Natural killer cell (primary cell): ENCODE measurements at regions of chr19 and their contacts with region 1.

Region 1: GRCh38 chr19:14383661-14384555 is 2.7 kb downstream of the ADGRE5 start:
- DNase-seq: peak; percentile 70 to 82
- ATAC-seq: peak; percentile 20 to 28 (median 21)
- H3K4me3 ChIP-seq: peak overlapping the region; percentile 71
- H3K4me3 Mint-ChIP-seq: peak overlapping the region; percentile 93
- H3K27ac ChIP-seq: peak overlapping the region; percentile 91
- H3K27ac Mint-ChIP-seq: peak overlapping the region; percentile 91 to 94
- H3K4me1 ChIP-seq: peaks cover 72% of the 10 kb centered on the region
- H3K4me1 Mint-ChIP-seq: peaks cover 47 to 55% of the 10 kb centered on the region in 2 donors
- H3K27me3 ChIP-seq: no peaks in the 10 kb centered on the region
- H3K27me3 Mint-ChIP-seq: no peaks in the 10 kb centered on the region
- CTCF ChIP-seq: no peak

Region 2: DNA sequence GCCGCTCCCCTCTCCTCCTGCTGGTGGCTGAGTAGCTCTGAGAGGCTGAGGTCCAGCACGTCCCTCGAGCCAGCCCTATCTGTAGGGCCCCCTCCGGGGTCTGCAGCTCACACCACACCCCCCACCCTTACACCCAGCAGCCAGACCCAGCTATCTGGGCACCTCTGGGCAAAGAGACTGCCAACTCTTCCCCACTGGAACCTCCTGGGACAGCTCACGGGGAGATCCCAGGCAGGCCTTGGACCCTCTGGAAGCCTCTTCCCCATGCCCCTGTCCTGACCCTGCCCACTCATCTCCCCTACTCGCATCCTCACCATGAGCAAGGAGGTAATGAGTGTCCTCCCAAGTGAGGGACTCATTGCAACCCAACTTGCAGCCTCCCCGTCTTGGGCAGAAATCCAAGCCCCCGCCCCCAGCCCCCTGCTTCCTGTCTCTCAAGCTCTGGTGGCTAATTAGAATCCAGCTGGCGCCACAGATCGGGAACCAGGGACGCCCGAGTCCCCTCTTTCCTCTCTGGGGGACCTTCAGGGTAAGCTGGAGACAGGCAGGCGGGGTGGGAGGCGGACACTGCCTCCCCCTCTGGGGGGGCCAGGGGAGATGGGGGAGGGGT is 200.1 kb before region 1 on chr19:
- intact Hi-C with region 1: no loop called
- DNase-seq: no peak
- ATAC-seq: no peak
- H3K4me3 ChIP-seq: no peak overlapping the region
- H3K4me3 Mint-ChIP-seq: no peak overlapping the region
- H3K27ac ChIP-seq: no peak overlapping the region
- H3K27ac Mint-ChIP-seq: no peak overlapping the region
- H3K4me1 ChIP-seq: no peaks in the 10 kb centered on the region
- H3K4me1 Mint-ChIP-seq: peaks cover 10% of the 10 kb centered on the region in 2 donors
- H3K27me3 ChIP-seq: no peaks in the 10 kb centered on the region
- H3K27me3 Mint-ChIP-seq: no peaks in the 10 kb centered on the region
- CTCF ChIP-seq: no peak

Region 3: GRCh38 chr19:14369399-14370168 is 14.3 kb before region 1 on chr19:
- intact Hi-C with region 1: loop called (anchors 1 kb)
- DNase-seq: peak; percentile 83 to 96
- ATAC-seq: peak; percentile 62 to 85 (median 77)
- H3K4me3 ChIP-seq: peak overlapping the region; percentile 41
- H3K4me3 Mint-ChIP-seq: peak overlapping the region; percentile 91
- H3K27ac ChIP-seq: peak overlapping the region; percentile 99
- H3K27ac Mint-ChIP-seq: peak overlapping the region; percentile 90 to 100
- H3K4me1 ChIP-seq: peaks cover 98% of the 10 kb centered on the region
- H3K4me1 Mint-ChIP-seq: peaks cover 58 to 69% of the 10 kb centered on the region in 2 donors
- H3K27me3 ChIP-seq: no peaks in the 10 kb centered on the region
- H3K27me3 Mint-ChIP-seq: no peaks in the 10 kb centered on the region
- CTCF ChIP-seq: no peak